ENCODE measurements at regions of chr1 and their contacts with region 1.

Region 1: GRCh38 chr1:199508653-199509052 is 518.9 kb upstream of the NR5A2 start:
- DNase-seq: no peak
- H3K4me3 Mint-ChIP-seq: no peak overlapping the region
- H3K27ac Mint-ChIP-seq: no peak overlapping the region
- H3K4me1 Mint-ChIP-seq: no peaks in the 10 kb centered on the region
- H3K27me3 Mint-ChIP-seq: no peaks in the 10 kb centered on the region
- CTCF ChIP-seq: no peak

Region 2: DNA sequence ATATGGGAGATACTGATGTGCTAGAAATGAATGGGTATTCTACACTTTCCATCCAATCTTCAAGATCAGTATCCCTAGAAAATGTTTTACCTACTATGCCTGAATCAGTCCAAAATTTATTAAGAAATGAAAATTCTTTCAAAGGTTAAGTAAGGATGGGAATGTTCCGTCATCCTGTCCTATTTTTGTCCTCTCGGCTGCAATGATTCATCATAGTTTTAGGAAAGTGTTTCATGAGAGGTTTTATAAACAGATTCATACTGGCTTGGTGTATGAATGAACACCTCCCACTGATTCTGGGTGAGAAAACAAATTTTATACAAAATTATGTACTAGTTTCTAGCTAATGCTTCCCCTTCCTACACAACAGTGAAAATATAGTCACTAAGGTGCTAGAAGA is 14.3 kb after region 1 on chr1:
- CTCF ChIA-PET with region 1: interaction called, 3 read pairs
- POLR2A ChIA-PET with region 1: no interaction called
- intact Hi-C with region 1: loop called (anchors 1 kb)
- DNase-seq: peak; percentile 43
- H3K4me3 Mint-ChIP-seq: no peak overlapping the region
- H3K27ac Mint-ChIP-seq: no peak overlapping the region
- H3K4me1 Mint-ChIP-seq: no peaks in the 10 kb centered on the region
- H3K27me3 Mint-ChIP-seq: no peaks in the 10 kb centered on the region
- CTCF ChIP-seq: no peak

Region 3: DNA sequence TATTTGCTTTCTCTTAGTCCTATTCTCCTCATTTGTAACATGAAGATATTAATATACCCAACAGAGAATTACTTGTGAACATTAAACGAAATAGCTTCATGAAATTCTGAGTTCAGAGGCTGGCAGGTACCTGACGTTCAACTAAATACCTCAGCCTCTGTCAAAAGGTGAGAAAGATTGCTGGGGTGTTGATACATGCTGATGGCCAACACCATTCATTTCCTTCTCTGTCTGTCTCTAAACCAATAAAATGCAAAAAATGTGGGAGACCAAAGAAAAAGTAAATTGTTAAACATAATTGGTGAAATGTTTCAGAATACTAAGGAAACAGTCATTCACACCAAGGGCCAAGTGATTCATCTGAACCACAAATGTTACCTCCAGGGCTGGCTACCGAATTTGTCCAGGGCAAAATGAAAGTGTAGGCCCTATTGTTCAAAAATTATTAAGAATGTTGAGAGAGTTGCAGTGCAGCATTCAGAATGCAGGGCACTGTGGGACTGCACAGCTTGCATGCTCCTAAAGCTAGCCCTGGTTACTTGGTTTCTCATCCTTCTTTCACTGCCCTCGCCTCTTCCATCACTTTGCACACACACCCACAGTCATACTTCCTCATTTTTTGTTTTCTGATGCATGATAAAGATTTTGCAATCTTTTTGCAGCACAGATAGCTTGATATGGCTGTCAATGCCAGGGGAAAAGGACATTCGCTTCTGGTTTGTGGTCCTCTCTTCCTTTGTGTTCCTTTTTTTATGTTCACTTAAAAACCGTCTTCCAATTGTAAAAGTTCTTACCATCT is 104.5 kb after region 1 on chr1:
- CTCF ChIA-PET with region 1: no interaction called
- POLR2A ChIA-PET with region 1: no interaction called
- intact Hi-C with region 1: no loop called
- DNase-seq: peak; percentile 67
- H3K4me3 Mint-ChIP-seq: no peak overlapping the region
- H3K27ac Mint-ChIP-seq: peak overlapping the region; percentile 1
- H3K4me1 Mint-ChIP-seq: peaks cover 15% of the 10 kb centered on the region
- H3K27me3 Mint-ChIP-seq: no peaks in the 10 kb centered on the region
- CTCF ChIP-seq: no peak

Measured in MCF 10A (cell line).